ENCODE measurements at regions of chr4 and their contacts with region 1.

Region 1: GRCh38 chr4:139603576-139604387 is 47.8 kb upstream of the SETD7 start:
- DNase-seq: peak; percentile 59
- ATAC-seq: peak; percentile 63
- H3K4me3 Mint-ChIP-seq: no peak overlapping the region
- H3K27ac Mint-ChIP-seq: no peak overlapping the region
- H3K4me1 Mint-ChIP-seq: peaks cover 28% of the 10 kb centered on the region
- H3K27me3 Mint-ChIP-seq: peaks cover 16% of the 10 kb centered on the region

Region 2: DNA sequence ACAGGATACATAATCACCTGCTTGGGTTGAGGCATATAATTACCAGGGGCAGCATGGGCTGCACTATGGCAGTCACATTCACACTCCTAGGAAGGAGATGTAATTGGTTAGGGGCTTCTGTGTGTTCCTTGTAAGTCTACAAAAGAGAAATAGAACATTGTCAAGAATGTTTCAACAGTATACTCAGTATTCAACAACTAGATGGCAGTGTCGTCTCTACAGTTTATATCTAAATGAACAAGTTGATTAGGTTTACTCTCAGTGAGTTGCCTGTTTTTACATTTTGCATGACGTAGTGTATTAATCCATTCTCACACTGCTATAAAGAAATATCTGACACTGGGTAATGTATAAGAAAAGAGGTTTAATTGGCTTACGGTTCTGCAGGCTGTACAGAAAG is 200.3 kb before region 1 on chr4:
- CTCF ChIA-PET with region 1: no interaction called
- DNase-seq: no peak
- ATAC-seq: no peak
- H3K4me3 Mint-ChIP-seq: no peak overlapping the region
- H3K27ac Mint-ChIP-seq: no peak overlapping the region
- H3K4me1 Mint-ChIP-seq: no peaks in the 10 kb centered on the region
- H3K27me3 Mint-ChIP-seq: no peaks in the 10 kb centered on the region

Region 3: GRCh38 chr4:139619644-139620043 is 15.9 kb after region 1 on chr4:
- CTCF ChIA-PET with region 1: interaction called, 11 read pairs
- DNase-seq: no peak
- ATAC-seq: peak; percentile 51
- H3K4me3 Mint-ChIP-seq: no peak overlapping the region
- H3K27ac Mint-ChIP-seq: no peak overlapping the region
- H3K4me1 Mint-ChIP-seq: peaks cover 2% of the 10 kb centered on the region
- H3K27me3 Mint-ChIP-seq: peaks cover 3% of the 10 kb centered on the region

Region 4: DNA sequence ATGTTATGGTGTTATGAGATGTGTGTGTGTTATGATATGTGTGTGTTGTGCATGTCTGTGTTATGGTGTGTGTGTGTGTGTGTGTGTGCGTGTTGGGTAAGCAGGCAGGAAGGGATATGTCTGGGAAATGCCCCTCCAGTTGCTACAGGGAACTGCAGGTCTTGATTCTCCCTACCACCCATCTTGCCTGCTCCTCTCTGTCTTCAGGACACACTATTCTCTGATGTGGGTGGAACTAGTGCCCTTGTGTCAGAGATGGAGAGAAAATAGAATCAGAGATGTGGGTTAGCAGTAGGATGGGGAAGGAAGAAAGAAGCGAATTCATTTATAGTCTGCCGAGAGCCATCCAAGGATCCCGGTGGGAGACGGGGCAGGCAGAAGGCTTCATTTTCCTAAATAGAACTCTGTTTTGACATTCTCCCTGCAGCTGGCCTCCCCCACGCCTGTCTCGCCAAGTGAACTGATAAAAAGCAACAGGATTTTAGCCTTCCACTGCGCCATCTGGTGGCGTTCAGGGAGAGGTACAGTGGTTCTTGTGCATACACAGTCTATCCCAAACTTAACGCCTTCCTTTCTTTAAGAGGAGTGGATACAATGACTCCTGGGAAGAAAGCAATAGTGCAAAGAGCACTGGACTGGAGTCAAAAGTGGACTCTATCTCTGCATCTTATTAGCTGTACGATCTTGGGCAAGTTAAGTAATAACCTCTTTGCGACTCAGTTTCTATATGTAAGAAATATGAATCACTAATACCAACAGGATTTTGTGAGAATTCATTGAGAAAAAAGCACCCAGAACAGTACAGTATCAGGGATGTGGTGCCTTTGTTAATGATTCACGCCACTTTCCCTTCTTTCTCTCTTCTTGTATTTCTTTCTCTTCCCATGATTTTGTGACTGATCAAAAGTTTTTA is 47.8 kb after region 1 on chr4:
- CTCF ChIA-PET with region 1: interaction called, 159 read pairs
- DNase-seq: peak; percentile 80
- ATAC-seq: peak; percentile 84
- H3K4me3 Mint-ChIP-seq: no peak overlapping the region
- H3K27ac Mint-ChIP-seq: no peak overlapping the region
- H3K4me1 Mint-ChIP-seq: peaks cover 7% of the 10 kb centered on the region
- H3K27me3 Mint-ChIP-seq: no peaks in the 10 kb centered on the region

Region 5: DNA sequence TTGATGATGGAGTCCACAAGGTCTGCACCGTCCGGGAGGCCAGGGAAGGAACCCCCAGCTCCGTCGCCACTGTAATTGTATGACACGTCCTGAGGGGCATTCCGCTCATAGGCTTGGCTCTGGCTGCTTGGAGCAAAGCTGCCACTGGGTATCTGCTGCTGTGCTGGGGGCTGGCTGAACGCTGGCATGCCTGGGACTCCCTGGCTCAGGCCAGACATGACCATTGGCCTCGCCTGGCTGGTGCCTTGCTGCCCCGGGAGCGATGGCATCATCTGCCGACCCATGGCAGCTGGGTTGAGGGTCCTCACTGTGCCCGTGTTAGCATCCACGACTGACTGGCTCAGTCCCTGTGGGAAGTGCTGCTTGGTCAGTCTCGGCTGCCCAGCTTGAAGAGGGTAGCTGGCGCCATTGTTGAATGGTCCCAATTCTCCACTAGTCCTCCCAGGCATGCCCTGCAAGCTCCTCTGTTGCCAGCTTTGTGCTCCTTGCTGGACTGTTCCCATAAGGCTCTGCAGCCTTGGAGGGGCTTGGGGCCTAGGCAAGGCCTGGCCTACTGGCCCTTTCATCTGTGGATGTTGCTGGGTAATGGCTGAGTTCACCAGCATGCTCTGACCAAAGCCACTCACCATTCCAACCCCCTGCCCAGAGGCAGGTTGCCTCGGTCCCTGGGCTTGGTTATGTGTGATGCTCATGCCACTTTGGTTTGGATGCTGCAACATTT is 115.8 kb after region 1 on chr4:
- CTCF ChIA-PET with region 1: no interaction called
- DNase-seq: no peak
- ATAC-seq: no peak
- H3K4me3 Mint-ChIP-seq: no peak overlapping the region
- H3K27ac Mint-ChIP-seq: no peak overlapping the region
- H3K4me1 Mint-ChIP-seq: no peaks in the 10 kb centered on the region
- H3K27me3 Mint-ChIP-seq: no peaks in the 10 kb centered on the region